CD4-positive, alpha-beta memory T cell (primary cell): ENCODE measurements at regions of chr15 and their contacts with region 1.

Region 1: GRCh38 chr15:40470423-40471104 is at the start of gene CHST14:
- DNase-seq: peak; percentile 42 to 70 (median 58)
- H3K4me3 ChIP-seq: peak within 1 kb of the TSS; percentile 58 to 74
- H3K4me3 Mint-ChIP-seq: peak within 1 kb of the TSS; percentile 87 to 93 (median 90)
- H3K27ac ChIP-seq: peak within 1 kb of the TSS; percentile 70
- H3K27ac Mint-ChIP-seq: peak within 1 kb of the TSS; percentile 87 to 94 (median 90)
- H3K4me1 ChIP-seq: peaks cover 23% of the 10 kb centered on the region
- H3K4me1 Mint-ChIP-seq: peaks cover 12 to 30% (median 22%) of the 10 kb centered on the region in 4 donors
- H3K27me3 ChIP-seq: no peaks in the 10 kb centered on the region
- H3K27me3 Mint-ChIP-seq: no peaks in the 10 kb centered on the region
- total RNA-seq, gene CHST14: 9.1 to 10.5 TPM

Region 2: DNA sequence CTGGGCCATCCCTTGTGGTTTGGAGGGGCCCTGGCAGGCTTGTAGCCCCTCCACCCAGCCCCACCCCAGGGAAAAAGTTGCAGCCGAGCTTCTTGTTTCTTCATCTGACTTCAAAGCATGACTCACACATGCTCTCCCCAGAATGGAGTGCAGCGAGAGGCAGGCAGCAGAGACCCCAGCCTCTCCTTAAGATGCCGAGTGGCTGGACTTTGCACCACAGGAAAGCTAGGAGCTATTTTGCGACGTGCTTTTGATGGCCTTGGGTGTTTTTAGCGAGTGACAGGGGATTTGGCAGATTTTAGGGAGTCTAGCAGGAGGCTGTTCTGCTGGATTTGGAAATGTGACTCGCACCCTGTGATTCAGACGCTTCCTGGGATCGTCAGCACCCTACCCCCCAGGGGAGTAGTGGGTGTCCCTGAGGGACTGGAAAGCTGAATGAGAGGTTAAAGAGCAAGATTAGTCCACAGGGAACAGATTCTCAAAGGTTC is 15.6 kb before region 1 on chr15:
- CTCF ChIA-PET with region 1: interaction called, 3 read pairs
- POLR2A ChIA-PET with region 1: interaction called, 4 read pairs
- intact Hi-C with region 1: loop called (anchors 2 kb)
- DNase-seq: no peak
- H3K4me3 ChIP-seq: no peak overlapping the region
- H3K4me3 Mint-ChIP-seq: peak overlapping the region in 7 of 8 donors; percentile 21 to 89 (median 67)
- H3K27ac ChIP-seq: peak overlapping the region; percentile 50
- H3K27ac Mint-ChIP-seq: peak overlapping the region; percentile 43 to 88 (median 80)
- H3K4me1 ChIP-seq: peaks cover 76% of the 10 kb centered on the region
- H3K4me1 Mint-ChIP-seq: peaks cover 55 to 78% (median 64%) of the 10 kb centered on the region in 4 donors
- H3K27me3 ChIP-seq: no peaks in the 10 kb centered on the region
- H3K27me3 Mint-ChIP-seq: no peaks in the 10 kb centered on the region

Region 3: DNA sequence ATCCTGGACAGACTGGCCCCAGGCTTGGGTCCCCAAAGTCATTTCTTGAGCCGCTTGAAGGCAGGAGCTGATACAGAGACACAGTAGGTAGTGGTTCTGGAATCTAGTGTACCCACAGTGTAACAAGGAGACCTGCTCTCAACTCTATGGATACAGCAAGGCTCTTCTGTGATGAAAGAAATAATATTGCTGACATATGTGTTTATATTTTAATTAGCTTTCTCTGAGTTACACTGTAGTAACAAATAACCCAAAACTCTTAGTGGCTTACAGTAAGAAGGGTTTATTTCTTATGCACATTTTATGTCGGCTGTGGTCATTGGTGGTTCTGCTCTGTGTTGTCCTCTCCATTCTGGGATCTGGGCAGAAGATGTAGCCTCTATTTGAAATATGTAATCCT is 45.8 kb after region 1 on chr15:
- CTCF ChIA-PET with region 1: no interaction called
- POLR2A ChIA-PET with region 1: no interaction called
- intact Hi-C with region 1: no loop called
- DNase-seq: no peak
- H3K4me3 ChIP-seq: no peak overlapping the region
- H3K4me3 Mint-ChIP-seq: no peak overlapping the region
- H3K27ac ChIP-seq: no peak overlapping the region
- H3K27ac Mint-ChIP-seq: no peak overlapping the region
- H3K4me1 ChIP-seq: peaks cover 9% of the 10 kb centered on the region
- H3K4me1 Mint-ChIP-seq: peaks cover 6 to 13% (median 8%) of the 10 kb centered on the region in 4 donors
- H3K27me3 ChIP-seq: peaks cover 10% of the 10 kb centered on the region
- H3K27me3 Mint-ChIP-seq: peaks cover 17 to 20% of the 10 kb centered on the region in 2 donors

Region 4: GRCh38 chr15:40999190-40999589 is 528.6 kb after region 1 on chr15:
- CTCF ChIA-PET with region 1: no interaction called
- POLR2A ChIA-PET with region 1: no interaction called
- intact Hi-C with region 1: no loop called
- DNase-seq: no peak
- H3K4me3 ChIP-seq: no peak overlapping the region
- H3K4me3 Mint-ChIP-seq: no peak overlapping the region
- H3K27ac ChIP-seq: no peak overlapping the region
- H3K27ac Mint-ChIP-seq: no peak overlapping the region
- H3K4me1 ChIP-seq: no peaks in the 10 kb centered on the region
- H3K4me1 Mint-ChIP-seq: no peaks in the 10 kb centered on the region
- H3K27me3 ChIP-seq: no peaks in the 10 kb centered on the region
- H3K27me3 Mint-ChIP-seq: no peaks in the 10 kb centered on the region